Activated T-helper 1 cell treated with anti-CD3 and anti-CD28 coated beads, Interleukin-12 subunit alpha, Interleukin-12 subunit beta, Interleukin-2, Interleukin-4 antibody, amounts not matched to agents 30 ng/mL and 10 ng/mL and 1 ng/mL, durations not matched to agents 14 hours and 24 hours and 36 hours (primary cell): ENCODE measurements at regions of chr6 and their contacts with region 1.

Region 1: GRCh38 chr6:83514866-83515466 is 2.6 kb downstream of the PRSS35 start:
- DNase-seq: no peak
- H3K4me3 Mint-ChIP-seq: no peak overlapping the region
- H3K27ac Mint-ChIP-seq: no peak overlapping the region
- H3K4me1 Mint-ChIP-seq: peaks cover 9% of the 10 kb centered on the region
- H3K27me3 Mint-ChIP-seq: peaks cover 41% of the 10 kb centered on the region

Region 2: GRCh38 chr6:83417880-83418663 is 96.9 kb before region 1 on chr6:
- intact Hi-C with region 1: loop called (anchors 2 kb)
- DNase-seq: no peak
- H3K4me3 Mint-ChIP-seq: no peak overlapping the region
- H3K27ac Mint-ChIP-seq: no peak overlapping the region
- H3K4me1 Mint-ChIP-seq: no peaks in the 10 kb centered on the region
- H3K27me3 Mint-ChIP-seq: no peaks in the 10 kb centered on the region